Prostate gland (tissue), 2 donors: ENCODE measurements at regions of chr1 and their contacts with region 1.

Region 1: GRCh38 chr1:24070821-24071393 is 41.0 kb downstream of the MYOM3 start:
- DNase-seq: peak; percentile 82
- H3K4me3 ChIP-seq: no peak overlapping the region
- H3K27ac ChIP-seq: no peak overlapping the region
- H3K4me1 ChIP-seq: no peaks in the 10 kb centered on the region
- H3K27me3 ChIP-seq: no peaks in the 10 kb centered on the region
- CTCF ChIP-seq: peak; percentile 79 to 92 (median 90)
- POLR2A ChIP-seq: no peak

Region 2: DNA sequence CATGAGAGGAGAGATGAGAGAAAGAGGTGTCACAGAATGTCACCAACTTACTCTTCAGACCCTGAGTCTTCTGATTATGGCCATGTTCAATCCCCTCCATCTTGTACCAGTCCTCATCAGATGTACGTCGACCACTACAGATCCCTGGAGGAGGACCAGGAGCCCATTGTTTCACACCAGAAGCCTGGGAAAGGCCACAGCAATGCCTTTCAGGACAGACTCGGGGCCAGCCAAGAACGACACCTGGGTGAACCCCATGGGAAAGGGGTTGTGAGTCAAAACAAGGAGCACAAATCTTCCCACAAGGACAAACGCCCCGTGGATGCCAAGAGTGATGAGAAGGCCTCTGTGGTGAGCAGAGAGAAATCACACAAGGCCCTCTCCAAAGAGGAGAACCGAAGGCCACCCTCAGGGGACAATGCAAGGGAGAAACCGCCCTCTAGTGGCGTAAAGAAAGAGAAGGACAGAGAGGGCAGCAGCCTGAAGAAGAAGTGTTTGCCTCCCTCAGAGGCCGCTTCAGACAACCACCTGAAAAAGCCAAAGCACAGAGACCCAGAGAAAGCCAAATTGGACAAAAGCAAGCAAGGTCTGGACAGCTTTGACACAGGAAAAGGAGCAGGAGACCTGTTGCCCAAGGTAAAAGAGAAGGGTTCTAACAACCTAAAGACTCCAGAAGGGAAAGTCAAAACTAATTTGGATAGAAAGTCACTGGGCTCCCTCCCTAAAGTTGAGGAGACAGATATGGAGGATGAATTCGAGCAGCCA is 319.7 kb before region 1 on chr1:
- intact Hi-C with region 1: no loop called
- DNase-seq: peak; percentile 35
- H3K4me3 ChIP-seq: no peak overlapping the region
- H3K27ac ChIP-seq: no peak overlapping the region
- H3K4me1 ChIP-seq: peaks cover 3% of the 10 kb centered on the region
- H3K27me3 ChIP-seq: no peaks in the 10 kb centered on the region
- CTCF ChIP-seq: peak in 3 of 4 experiments; percentile 52 to 59 (median 56)
- POLR2A ChIP-seq: no peak

Region 3: DNA sequence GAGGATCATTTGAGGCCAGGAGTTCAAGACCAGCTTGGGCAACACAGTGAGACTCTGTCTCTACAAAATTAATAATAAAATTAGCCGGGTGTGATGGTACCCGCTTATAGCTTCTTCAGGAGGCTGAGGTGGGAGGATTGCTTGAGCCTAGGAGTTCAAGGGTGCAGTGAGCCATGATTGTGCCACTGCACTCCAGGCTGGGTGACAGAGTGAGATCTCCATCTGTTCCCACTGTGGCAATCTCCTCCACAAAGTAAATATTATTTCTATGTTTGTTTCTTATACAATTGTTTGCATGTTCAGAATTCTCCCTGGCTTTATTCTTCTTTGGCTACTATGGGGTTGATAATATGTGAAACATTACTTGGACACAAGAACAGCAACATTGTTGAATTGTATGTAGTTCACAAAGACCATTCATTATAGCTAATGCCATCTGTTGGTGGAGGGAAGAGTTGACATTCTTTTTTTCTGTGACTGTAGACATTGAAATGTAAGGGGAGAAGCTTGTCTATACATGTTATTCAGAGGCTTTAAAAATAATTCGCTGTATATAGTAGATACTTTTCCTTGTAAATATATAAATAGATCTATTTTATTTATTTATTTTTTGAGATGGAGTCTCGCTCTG is 43.0 kb before region 1 on chr1:
- intact Hi-C with region 1: no loop called
- DNase-seq: no peak
- H3K4me3 ChIP-seq: no peak overlapping the region
- H3K27ac ChIP-seq: no peak overlapping the region
- H3K4me1 ChIP-seq: peaks cover under 1% of the 10 kb centered on the region
- H3K27me3 ChIP-seq: no peaks in the 10 kb centered on the region
- CTCF ChIP-seq: peak in 3 of 4 experiments; percentile 62 to 82 (median 75)
- POLR2A ChIP-seq: no peak

Region 4: DNA sequence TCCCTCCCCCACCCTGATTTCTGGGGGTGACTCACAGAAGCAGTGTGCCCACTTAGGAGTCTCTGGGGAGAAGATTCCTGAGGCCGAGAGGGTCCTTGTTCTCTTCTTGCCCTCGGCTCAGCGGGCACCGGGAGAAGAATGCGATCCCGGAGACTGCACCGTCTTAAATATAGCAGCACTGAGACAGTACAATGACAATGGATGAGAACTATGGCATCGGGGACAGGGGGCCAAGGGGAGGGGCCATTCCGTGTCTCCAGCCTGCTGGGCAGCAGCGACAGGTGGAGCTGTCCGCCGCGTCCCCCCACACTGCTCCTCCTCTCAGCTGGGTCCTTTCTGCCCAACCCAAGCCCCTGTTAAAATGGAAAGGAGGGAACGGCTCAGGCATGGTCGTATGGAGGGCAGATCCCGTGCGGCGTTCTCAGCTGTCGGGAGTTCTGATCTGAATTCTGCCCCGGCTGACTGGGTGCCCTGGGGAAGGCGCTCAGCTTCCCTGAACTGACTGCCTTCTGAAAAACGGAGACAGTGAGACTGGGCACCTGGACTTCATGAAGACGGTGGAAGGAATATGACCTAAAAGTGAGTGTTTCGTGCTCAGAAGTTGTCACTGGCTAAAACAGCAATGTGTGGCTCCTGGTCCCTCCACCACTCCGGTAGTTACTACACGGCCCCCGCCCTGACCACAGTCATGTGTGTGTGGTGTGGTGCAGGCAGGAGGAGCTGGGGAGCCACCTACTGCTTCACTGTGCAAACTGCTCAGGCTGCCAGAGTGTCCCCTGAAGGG is 41.3 kb after region 1 on chr1 and contains the start of gene MYOM3:
- intact Hi-C with region 1: loop called (anchors 2 kb)
- DNase-seq: peak; percentile 66
- H3K4me3 ChIP-seq: no peak within 1 kb of the TSS
- H3K27ac ChIP-seq: peak within 1 kb of the TSS in 1 of 2 donors; percentile 7
- H3K4me1 ChIP-seq: no peaks in the 10 kb centered on the region
- H3K27me3 ChIP-seq: no peaks in the 10 kb centered on the region
- CTCF ChIP-seq: peak in 3 of 4 experiments; percentile 26 to 66 (median 62)
- POLR2A ChIP-seq: no peak
- total RNA-seq, gene MYOM3: 3.3 to 28.5 TPM

Region 5: DNA sequence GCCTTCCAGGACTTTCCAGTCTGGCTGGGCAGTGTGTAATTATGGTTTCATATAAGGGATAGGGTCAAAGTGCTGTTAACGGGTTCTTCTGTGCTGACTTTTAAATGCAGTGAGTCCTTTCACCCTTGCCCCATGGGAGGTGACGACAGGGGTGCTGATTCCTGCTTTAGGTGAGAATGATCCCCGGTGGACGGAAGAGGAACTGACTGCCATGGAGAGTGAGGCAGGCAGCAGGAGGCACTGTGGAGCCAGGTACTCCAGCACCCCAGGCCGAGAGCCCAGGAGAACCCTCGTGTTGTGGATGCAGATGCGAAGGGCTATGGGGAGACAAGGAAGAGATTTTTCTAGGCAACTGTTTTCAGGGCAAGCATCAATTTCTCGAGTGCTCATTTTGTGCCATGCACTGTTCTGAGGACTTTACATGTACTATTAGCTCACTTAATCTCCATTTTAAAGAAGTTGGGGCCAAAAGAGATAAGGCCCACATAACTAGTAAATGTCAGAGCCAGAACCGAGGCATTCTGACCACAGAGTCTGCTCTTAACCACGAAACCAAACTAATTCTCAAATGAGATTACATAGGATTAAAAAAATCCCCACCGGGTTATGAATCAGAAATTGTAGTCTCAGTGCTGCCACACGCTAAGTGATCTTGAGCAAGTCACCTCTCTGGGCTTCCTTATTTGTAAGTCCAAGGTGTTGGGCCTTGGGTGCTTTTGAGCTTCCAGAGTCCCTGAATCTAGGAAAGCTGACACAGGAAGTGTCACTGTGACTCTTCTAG is 314.4 kb after region 1 on chr1:
- intact Hi-C with region 1: loop called (anchors 10 kb)
- DNase-seq: no peak
- H3K4me3 ChIP-seq: no peak overlapping the region
- H3K27ac ChIP-seq: peak overlapping the region in 1 of 2 donors; percentile 51
- H3K4me1 ChIP-seq: peaks cover 2% of the 10 kb centered on the region
- H3K27me3 ChIP-seq: no peaks in the 10 kb centered on the region
- CTCF ChIP-seq: peak in 1 of 4 experiments; percentile 10
- POLR2A ChIP-seq: no peak